Endothelial cell of umbilical vein (primary cell): ENCODE measurements at regions of chr15 and their contacts with region 1.

Region 1: GRCh38 chr15:63188926-63189871 is at the start of gene RAB8B:
- DNase-seq: peak; percentile 94
- H3K4me3 ChIP-seq: peak within 1 kb of the TSS; percentile 62 to 88 (median 74)
- H3K27ac ChIP-seq: peak within 1 kb of the TSS; percentile 58
- H3K4me1 ChIP-seq: peaks cover 30% of the 10 kb centered on the region
- H3K27me3 ChIP-seq: no peaks in the 10 kb centered on the region
- CTCF ChIP-seq: no peak
- POLR2A ChIP-seq: peak; percentile 86
- total RNA-seq, gene RAB8B: 50.3 and 52.5 TPM in 2 replicates

Region 2: DNA sequence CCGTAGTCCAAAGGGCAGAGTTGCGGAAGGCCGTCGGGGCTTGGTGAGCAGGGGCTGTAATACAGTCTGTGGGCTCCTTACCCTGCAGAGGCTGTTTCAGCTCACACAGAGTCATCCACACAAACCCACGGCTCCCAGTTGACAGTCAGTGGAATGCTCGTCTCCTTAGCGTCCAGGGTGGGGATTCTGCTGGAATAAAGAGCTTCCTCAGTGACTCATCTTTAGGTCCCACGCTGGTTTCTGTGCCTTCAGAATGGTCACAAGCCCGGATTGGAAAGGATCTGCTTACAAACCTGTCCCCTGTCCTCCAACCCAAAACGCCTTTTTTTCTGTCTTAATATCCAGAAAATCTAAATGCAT is 347.9 kb before region 1 on chr15:
- CTCF ChIA-PET with region 1: no interaction called
- POLR2A ChIA-PET with region 1: no interaction called
- dilution Hi-C with region 1: no loop called
- intact Hi-C with region 1: no loop called
- DNase-seq: no peak
- H3K4me3 ChIP-seq: no peak overlapping the region
- H3K27ac ChIP-seq: no peak overlapping the region
- H3K4me1 ChIP-seq: peaks cover 17% of the 10 kb centered on the region
- H3K27me3 ChIP-seq: no peaks in the 10 kb centered on the region
- CTCF ChIP-seq: no peak
- POLR2A ChIP-seq: no peak

Region 3: GRCh38 chr15:63048115-63048775 is 141.0 kb before region 1 on chr15:
- CTCF ChIA-PET with region 1: interaction called, 3 read pairs
- POLR2A ChIA-PET with region 1: no interaction called
- dilution Hi-C with region 1: no loop called
- intact Hi-C with region 1: loop called (anchors 2 kb)
- DNase-seq: peak; percentile 94
- H3K4me3 ChIP-seq: peak overlapping the region; percentile 72 to 87 (median 78)
- H3K27ac ChIP-seq: peak overlapping the region; percentile 68
- H3K4me1 ChIP-seq: peaks cover 81% of the 10 kb centered on the region
- H3K27me3 ChIP-seq: no peaks in the 10 kb centered on the region
- CTCF ChIP-seq: peak; percentile 92 to 95
- POLR2A ChIP-seq: peak; percentile 66

Region 4: DNA sequence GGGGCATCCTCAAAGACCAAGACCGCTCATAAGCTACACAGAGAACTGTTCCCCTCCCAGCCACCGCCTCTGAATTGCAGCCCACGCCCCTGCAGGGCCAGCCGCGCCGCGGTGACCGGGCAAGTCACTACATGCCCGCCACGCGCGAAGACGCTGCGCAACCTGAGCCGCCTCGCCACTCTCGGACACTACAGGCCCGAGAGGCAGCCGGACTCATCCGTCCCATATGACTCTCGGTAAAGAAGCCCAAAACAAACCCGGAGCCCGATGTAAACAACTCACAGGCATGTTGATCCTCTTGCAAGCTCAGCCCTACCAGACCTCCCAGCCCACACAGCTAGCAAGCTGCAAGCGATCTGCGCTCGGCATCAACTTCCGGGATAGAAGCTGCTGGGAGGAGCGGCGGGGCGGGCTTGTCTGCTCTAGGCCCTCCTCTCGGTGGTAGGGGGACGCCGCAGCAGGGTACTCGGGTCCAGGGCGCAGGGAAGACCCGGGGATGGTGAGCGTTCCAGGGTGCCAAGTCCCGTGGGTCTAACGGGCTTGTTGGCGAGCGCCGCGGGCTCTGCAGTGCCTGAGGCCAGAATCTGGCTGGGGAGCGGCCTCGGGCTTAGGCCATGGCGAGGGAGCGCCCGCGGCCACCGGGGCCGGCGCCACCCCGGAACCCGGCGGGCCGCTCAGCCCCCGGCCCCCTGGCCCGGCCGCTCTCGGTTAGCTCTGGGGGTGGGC is 31.9 kb before region 1 on chr15 and contains the start of gene RPS27L:
- CTCF ChIA-PET with region 1: interaction called, 4 read pairs
- POLR2A ChIA-PET with region 1: interaction called, 5 read pairs
- dilution Hi-C with region 1: no loop called
- intact Hi-C with region 1: loop called (anchors 1 kb)
- DNase-seq: peak; percentile 92
- H3K4me3 ChIP-seq: peak within 1 kb of the TSS; percentile 54 to 98 (median 88)
- H3K27ac ChIP-seq: peak within 1 kb of the TSS; percentile 71
- H3K4me1 ChIP-seq: peaks cover 11% of the 10 kb centered on the region
- H3K27me3 ChIP-seq: no peaks in the 10 kb centered on the region
- CTCF ChIP-seq: no peak
- POLR2A ChIP-seq: peak; percentile 99
- total RNA-seq, gene RPS27L: 338 and 345 TPM in 2 replicates

Region 5: GRCh38 chr15:63212050-63213004 is 23.1 kb after region 1 on chr15:
- CTCF ChIA-PET with region 1: interaction called, 4 read pairs
- POLR2A ChIA-PET with region 1: no interaction called
- dilution Hi-C with region 1: no loop called
- intact Hi-C with region 1: loop called (anchors 2 kb)
- DNase-seq: peak; percentile 51
- H3K4me3 ChIP-seq: no peak overlapping the region
- H3K27ac ChIP-seq: peak overlapping the region; percentile 29
- H3K4me1 ChIP-seq: peaks cover 24% of the 10 kb centered on the region
- H3K27me3 ChIP-seq: no peaks in the 10 kb centered on the region
- CTCF ChIP-seq: no peak
- POLR2A ChIP-seq: no peak

Region 6: DNA sequence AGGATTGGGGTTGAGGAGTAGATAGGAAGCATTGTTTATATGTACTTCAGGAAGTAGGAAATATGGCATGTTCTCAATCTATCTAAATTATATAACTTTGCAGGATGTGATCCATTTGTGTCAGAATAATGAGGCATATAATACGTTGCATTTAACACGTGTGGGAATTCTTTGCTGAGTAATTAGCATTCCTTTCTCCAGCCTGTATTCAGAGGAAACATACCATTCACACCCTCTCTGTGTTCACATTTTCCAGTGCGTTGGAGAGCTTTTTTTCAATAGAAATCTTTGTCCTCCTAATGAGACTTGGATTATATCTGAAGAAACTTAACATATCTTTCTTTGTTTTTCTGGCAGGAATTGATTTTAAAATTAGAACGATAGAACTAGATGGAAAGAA is 55.2 kb after region 1 on chr15:
- CTCF ChIA-PET with region 1: interaction called, 6 read pairs
- POLR2A ChIA-PET with region 1: no interaction called
- dilution Hi-C with region 1: no loop called
- intact Hi-C with region 1: loop called (anchors 1 kb)
- DNase-seq: peak; percentile 92
- H3K4me3 ChIP-seq: peak overlapping the region in 1 of 3 experiments; percentile 33
- H3K27ac ChIP-seq: peak overlapping the region; percentile 90
- H3K4me1 ChIP-seq: peaks cover 21% of the 10 kb centered on the region
- H3K27me3 ChIP-seq: no peaks in the 10 kb centered on the region
- CTCF ChIP-seq: no peak
- POLR2A ChIP-seq: no peak

Region 7: GRCh38 chr15:63277038-63277892 is 88.1 kb after region 1 on chr15 and contains the start of gene APH1B:
- CTCF ChIA-PET with region 1: interaction called, 3 read pairs
- POLR2A ChIA-PET with region 1: interaction called, 3 read pairs
- dilution Hi-C with region 1: no loop called
- intact Hi-C with region 1: loop called (anchors 1 kb)
- DNase-seq: peak; percentile 75
- H3K4me3 ChIP-seq: peak within 1 kb of the TSS; percentile 68 to 85 (median 73)
- H3K27ac ChIP-seq: peak within 1 kb of the TSS; percentile 33
- H3K4me1 ChIP-seq: peaks cover 9% of the 10 kb centered on the region
- H3K27me3 ChIP-seq: no peaks in the 10 kb centered on the region
- CTCF ChIP-seq: no peak
- POLR2A ChIP-seq: peak; percentile 83
- total RNA-seq, gene APH1B: 24.6 and 28.8 TPM in 2 replicates